Activated CD4-positive, alpha-beta T cell treated with anti-CD3 and anti-CD28 coated beads, Interleukin-2, amount 10 ng/mL, durations not matched to agents 24 days and 14 days (primary cell): ENCODE measurements at regions of chr3 and their contacts with region 1.

Region 1: GRCh38 chr3:122299872-122300460 is 25.1 kb upstream of the CSTA start:
- DNase-seq: peak; percentile 84
- H3K4me3 Mint-ChIP-seq: no peak overlapping the region
- H3K27ac Mint-ChIP-seq: no peak overlapping the region
- H3K4me1 Mint-ChIP-seq: peaks cover 21% of the 10 kb centered on the region
- H3K27me3 Mint-ChIP-seq: no peaks in the 10 kb centered on the region

Region 2: DNA sequence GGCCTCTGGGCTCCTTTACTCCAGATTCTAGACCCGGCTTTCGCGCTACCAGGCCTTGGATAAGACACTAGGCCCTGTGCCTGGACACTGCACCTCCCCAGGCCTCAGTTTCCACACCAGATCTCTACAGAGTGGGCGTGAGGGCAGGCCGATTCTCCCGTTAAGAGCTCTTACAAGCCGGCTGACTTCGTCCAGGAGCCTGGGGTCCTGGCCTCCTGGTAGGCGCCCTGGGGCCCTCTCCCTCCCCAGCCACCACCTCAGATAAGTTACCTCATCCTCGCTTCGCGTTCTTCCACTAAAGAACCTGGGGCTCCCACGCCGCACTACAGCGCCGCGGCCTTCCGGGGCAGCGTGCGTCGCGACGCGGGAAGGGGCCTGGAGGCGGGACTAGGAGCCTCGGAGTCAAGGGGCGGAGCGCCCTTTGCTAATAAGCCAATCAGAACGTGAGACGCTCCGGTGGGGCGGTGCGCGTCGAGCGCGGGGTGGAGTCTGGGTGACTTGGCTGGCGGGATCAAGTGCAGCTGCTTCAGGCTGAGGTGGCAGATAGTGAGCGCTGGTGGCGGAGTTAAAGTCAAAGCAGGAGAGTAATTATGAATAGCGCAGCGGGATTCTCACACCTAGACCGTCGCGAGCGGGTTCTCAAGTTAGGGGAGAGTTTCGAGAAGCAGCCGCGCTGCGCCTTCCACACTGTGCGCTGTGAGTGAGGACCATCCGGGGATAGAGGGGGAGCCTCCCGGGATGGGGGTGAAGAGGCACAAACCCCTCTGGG is 465.1 kb before region 1 on chr3 and contains the starts of genes EAF2 and IQCB1:
- intact Hi-C with region 1: loop called (anchors 1 kb)
- DNase-seq: peak; percentile 99
- H3K4me3 Mint-ChIP-seq: peak within 1 kb of the TSS; percentile 90
- H3K27ac Mint-ChIP-seq: peak within 1 kb of the TSS; percentile 96
- H3K4me1 Mint-ChIP-seq: peaks cover 41% of the 10 kb centered on the region
- H3K27me3 Mint-ChIP-seq: no peaks in the 10 kb centered on the region
- total RNA-seq, gene EAF2: 13.7 and 14.5 TPM in 2 replicates
- total RNA-seq, gene IQCB1: 49.1 and 51.6 TPM in 2 replicates

Region 3: DNA sequence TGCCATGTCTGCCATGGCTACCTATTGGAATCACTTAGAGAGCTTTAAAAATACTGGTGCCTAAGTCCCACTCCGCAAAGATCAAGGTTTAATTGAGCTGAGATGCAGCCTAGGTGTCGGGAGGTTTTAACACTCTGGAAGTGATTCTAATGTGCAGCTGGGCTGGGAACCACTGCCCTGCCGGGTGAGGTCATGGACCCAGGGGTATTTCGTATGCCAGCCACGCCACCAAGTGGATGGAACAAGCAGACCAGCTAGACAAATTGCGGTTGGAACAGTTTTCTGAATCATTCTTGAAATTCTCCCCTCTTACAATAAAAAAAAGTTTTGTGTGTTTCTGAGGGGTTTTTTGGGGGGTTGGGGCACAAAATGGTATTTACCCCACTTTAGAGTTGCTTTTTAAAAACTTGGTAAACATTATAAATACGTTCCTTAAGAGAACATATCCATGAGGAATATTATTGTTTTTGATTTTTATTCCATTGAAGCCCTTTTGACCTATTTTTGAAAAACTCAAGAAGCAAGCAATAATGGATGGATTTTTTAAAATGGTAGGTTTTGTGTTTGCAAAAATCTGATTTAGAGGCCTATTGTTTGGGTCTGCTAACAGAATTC is 41.1 kb before region 1 on chr3:
- intact Hi-C with region 1: loop called (anchors 1 kb)
- DNase-seq: peak; percentile 85
- H3K4me3 Mint-ChIP-seq: no peak overlapping the region
- H3K27ac Mint-ChIP-seq: no peak overlapping the region
- H3K4me1 Mint-ChIP-seq: peaks cover 16% of the 10 kb centered on the region
- H3K27me3 Mint-ChIP-seq: peaks cover 12% of the 10 kb centered on the region

Region 4: GRCh38 chr3:122283796-122284445 is 16.0 kb before region 1 on chr3:
- intact Hi-C with region 1: no loop called
- DNase-seq: no peak
- H3K4me3 Mint-ChIP-seq: no peak overlapping the region
- H3K27ac Mint-ChIP-seq: no peak overlapping the region
- H3K4me1 Mint-ChIP-seq: no peaks in the 10 kb centered on the region
- H3K27me3 Mint-ChIP-seq: peaks cover 27% of the 10 kb centered on the region

Region 5: GRCh38 chr3:122310361-122310760 is 10.4 kb after region 1 on chr3:
- intact Hi-C with region 1: no loop called
- DNase-seq: no peak
- H3K4me3 Mint-ChIP-seq: no peak overlapping the region
- H3K27ac Mint-ChIP-seq: no peak overlapping the region
- H3K4me1 Mint-ChIP-seq: peaks cover 7% of the 10 kb centered on the region
- H3K27me3 Mint-ChIP-seq: peaks cover 5% of the 10 kb centered on the region

Region 6: GRCh38 chr3:122322095-122323075 is 22.4 kb after region 1 on chr3:
- intact Hi-C with region 1: loop called (anchors 2 kb)
- DNase-seq: peak; percentile 87
- H3K4me3 Mint-ChIP-seq: peak overlapping the region; percentile 24
- H3K27ac Mint-ChIP-seq: peak overlapping the region; percentile 73
- H3K4me1 Mint-ChIP-seq: peaks cover 24% of the 10 kb centered on the region
- H3K27me3 Mint-ChIP-seq: peaks cover 2% of the 10 kb centered on the region

Region 7: GRCh38 chr3:122365073-122365472 is 65.1 kb after region 1 on chr3:
- intact Hi-C with region 1: loop called (anchors 2 kb)
- DNase-seq: no peak
- H3K4me3 Mint-ChIP-seq: peak overlapping the region; percentile 30
- H3K27ac Mint-ChIP-seq: peak overlapping the region; percentile 95
- H3K4me1 Mint-ChIP-seq: peaks cover 33% of the 10 kb centered on the region
- H3K27me3 Mint-ChIP-seq: no peaks in the 10 kb centered on the region